Mammary epithelial cell (primary cell): ENCODE measurements at regions of chr16 and their contacts with region 1.

Region 1: DNA sequence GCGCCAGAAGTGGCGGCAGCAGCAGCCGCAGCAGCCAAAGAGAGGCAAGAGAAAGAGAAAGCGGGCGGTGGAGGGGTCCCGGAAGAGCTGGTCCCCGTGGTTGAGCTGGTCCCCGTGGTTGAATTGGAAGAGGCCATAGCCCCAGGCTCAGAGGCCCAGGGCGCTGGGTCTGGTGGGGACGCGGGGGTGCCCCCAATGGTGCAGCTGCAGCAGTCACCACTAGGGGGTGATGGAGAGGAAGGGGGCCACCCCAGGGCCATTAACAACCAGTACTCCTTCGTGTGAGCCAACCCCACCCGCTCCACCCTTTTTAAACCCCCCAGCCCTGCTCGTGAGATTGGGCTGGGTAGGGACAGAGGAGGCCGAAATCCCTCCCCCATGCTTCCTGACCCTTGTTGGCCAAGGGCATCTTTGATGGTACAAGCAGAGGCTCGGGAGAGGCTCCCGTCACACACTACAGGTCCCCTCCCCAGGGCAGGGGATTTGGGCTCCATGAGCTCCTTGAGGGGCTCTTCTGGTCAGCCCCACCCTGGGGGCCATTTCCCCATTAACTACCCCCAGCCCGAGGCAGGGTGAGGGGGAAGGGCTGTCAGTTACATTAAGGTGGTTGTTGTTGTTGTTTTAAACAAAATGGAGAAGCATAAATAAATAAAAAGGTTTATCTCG is 4.6 kb upstream of the ATP2A1 start:
- DNase-seq: no peak
- H3K4me3 ChIP-seq: no peak overlapping the region
- H3K27ac ChIP-seq: no peak overlapping the region
- H3K4me1 ChIP-seq: no peaks in the 10 kb centered on the region
- H3K27me3 ChIP-seq: no peaks in the 10 kb centered on the region
- CTCF ChIP-seq: peak; percentile 69 to 76

Region 2: DNA sequence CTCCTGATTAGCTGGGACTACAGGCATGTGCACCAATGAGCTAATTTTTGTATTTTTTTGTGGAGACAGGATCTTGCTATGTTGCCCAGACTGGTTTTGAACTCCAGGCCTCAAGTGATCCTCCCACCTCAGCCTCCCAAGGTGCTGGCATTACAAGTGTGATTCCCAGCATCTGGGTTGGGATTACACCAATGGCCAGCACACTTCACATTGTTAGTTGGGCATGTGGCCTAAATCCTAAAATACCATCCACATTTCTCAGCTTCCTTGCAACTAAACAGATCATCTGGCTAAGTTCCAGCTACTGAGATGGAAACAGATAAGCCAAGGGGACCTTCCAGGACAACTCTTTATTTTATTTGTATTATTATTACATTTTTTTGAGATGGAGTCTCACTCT is 41.5 kb after region 1 on chr16:
- CTCF ChIA-PET with region 1: no interaction called
- dilution Hi-C with region 1: loop called (anchors 5 kb)
- in situ Hi-C with region 1: loop called in 1 of 2 experiments (anchors 10 kb)
- intact Hi-C with region 1: no loop called
- DNase-seq: no peak
- H3K4me3 ChIP-seq: no peak overlapping the region
- H3K27ac ChIP-seq: no peak overlapping the region
- H3K4me1 ChIP-seq: peaks cover 4% of the 10 kb centered on the region
- H3K27me3 ChIP-seq: no peaks in the 10 kb centered on the region
- CTCF ChIP-seq: no peak